Left cardiac atrium (tissue), 4 donors: ENCODE measurements at regions of chr1 and their contacts with region 1.

Region 1: DNA sequence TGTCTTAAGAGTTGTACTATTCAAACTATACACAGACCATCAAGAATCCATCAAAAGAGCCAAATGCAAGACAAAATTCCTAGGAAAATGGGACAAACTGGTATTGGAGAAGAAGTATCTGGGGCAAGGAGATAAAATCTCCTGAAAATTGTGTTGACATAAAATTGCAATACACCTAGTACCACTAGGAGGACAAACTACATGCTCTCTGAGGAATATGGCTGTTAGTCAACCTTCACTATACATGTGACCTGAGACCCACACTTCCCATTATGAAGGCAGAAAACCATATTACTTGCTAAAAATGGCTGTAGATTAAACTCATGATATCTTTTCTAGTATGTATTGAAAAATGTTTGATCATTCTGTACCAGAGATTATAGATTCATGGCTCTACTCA is 30.0 kb downstream of the IRF2BP2 start:
- DNase-seq: no peak
- ATAC-seq: no peak

Region 2: GRCh38 chr1:234533975-234534876 is 45.7 kb before region 1 on chr1:
- intact Hi-C with region 1: loop called in 1 of 2 experiments (anchors 5 kb)
- DNase-seq: peak; percentile 96
- ATAC-seq: peak; percentile 24 to 29

Region 3: GRCh38 chr1:234544087-234544579 is 35.8 kb before region 1 on chr1:
- intact Hi-C with region 1: loop called (anchors 5 kb)
- DNase-seq: peak; percentile 76
- ATAC-seq: peak; percentile 81 to 85